Heart right ventricle (tissue), 16 donors: ENCODE measurements at regions of chr15 and their contacts with region 1.

Region 1: GRCh38 chr15:77426871-77427270 is 6.2 kb downstream of the HMG20A start:
- DNase-seq: no peak
- ATAC-seq: no peak
- H3K4me3 ChIP-seq: no peak overlapping the region
- H3K27ac ChIP-seq: no peak overlapping the region
- H3K4me1 ChIP-seq: peaks cover 0 to 45% (median 25%) of the 10 kb centered on the region in 9 donors
- H3K27me3 ChIP-seq: no peaks in the 10 kb centered on the region
- CTCF ChIP-seq: no peak

Region 2: DNA sequence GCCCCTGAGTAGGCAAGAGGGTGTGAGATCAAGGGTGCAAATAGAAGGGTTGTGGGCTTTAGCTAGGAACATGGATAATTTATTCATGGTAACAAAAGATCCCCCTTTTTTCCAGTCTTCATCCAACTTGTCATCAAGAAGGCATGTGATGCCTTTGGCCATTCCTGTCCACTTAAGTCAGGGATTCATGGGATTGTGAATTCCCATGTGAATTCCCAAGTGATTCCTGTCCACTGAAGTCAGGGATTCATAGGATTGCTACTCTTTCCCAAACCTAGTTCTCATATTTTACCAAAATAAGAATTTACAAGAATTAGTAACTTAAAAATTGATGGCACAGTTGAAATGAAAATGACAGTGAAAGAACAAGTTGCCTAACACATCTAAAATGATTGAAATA is 34.6 kb after region 1 on chr15:
- intact Hi-C with region 1: loop called in 1 of 10 experiments (anchors 5 kb)
- DNase-seq: no peak
- ATAC-seq: no peak
- H3K4me3 ChIP-seq: no peak overlapping the region
- H3K27ac ChIP-seq: peak overlapping the region in 4 of 10 donors; percentile 10 to 62 (median 38)
- H3K4me1 ChIP-seq: peaks cover 7 to 62% (median 42%) of the 10 kb centered on the region in 9 donors
- H3K27me3 ChIP-seq: no peaks in the 10 kb centered on the region
- CTCF ChIP-seq: no peak